Calu3 (cell line): ENCODE measurements at regions of chr2 and their contacts with region 1.

Region 1: DNA sequence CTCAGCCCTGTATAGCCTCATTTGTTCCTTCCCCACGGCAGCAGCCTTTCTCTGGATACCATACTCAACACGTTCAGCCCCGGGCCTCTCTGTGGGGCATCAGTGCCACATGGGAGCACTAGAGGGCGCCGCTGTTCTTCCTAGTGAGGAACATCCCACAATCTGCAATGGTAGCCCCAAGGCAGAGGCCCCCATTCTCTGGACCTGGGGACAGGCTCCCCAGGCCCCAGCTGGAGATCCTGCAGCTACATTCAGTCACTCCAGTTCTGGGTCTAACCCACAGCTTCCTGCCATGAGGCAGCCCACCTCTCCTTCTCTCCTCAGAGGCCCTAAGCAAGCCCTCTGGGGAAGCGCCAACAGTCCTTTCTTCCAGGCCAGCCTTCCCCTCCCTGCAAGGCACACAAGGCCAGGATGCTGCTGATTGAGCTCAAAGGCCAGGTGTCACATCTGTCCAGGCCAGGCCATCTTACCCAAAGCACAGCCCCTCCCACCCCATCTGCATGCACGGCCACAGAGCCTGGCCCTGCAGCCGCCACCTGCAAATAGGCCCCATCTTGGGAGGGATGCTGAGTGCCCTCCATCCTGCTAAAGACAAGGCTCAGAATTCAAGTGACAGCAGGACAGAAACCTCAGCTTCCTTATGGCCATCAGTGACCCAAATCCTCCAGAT is 14.3 kb upstream of the SFXN5 start:
- DNase-seq: peak; percentile 88
- H3K4me3 Mint-ChIP-seq: no peak overlapping the region
- H3K27ac Mint-ChIP-seq: no peak overlapping the region
- H3K4me1 Mint-ChIP-seq: peaks cover 35% of the 10 kb centered on the region
- H3K27me3 Mint-ChIP-seq: no peaks in the 10 kb centered on the region
- CTCF ChIP-seq: peak; percentile 75

Region 2: GRCh38 chr2:72980535-72981217 is 105.2 kb before region 1 on chr2:
- CTCF ChIA-PET with region 1: no interaction called
- intact Hi-C with region 1: no loop called
- DNase-seq: no peak
- H3K4me3 Mint-ChIP-seq: no peak overlapping the region
- H3K27ac Mint-ChIP-seq: no peak overlapping the region
- H3K4me1 Mint-ChIP-seq: no peaks in the 10 kb centered on the region
- H3K27me3 Mint-ChIP-seq: no peaks in the 10 kb centered on the region
- CTCF ChIP-seq: no peak

Region 3: DNA sequence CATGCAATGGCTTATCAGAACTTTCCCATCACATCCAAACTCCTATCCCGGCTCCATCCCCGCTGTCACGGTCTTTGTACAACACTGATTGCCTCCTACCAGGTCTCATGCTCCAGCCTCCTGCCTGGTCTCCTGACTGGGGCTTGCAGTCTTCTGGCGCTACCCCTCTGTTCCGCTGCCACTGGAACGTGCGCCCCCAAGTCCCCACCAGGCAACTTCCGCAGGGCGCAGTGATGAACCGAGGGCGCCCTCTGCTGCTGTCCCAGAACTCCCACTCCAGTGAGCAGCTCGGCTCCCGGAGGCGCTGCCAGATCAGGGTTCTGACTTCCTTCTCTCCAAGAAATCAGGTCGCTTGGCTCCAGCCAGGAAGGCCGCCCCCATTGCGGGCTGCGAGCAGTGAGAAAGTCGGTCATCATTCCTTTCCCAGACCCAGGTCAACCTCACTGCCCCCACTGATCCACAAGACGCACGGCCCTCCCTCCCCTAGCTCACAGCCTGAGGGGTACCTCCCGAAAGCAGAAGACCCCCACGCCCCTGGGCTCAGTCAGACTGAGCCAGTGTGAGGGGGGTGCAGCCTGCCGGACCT is 70.8 kb after region 1 on chr2:
- CTCF ChIA-PET with region 1: interaction called, 22 read pairs
- intact Hi-C with region 1: loop called (anchors 1 kb)
- DNase-seq: peak; percentile 71
- H3K4me3 Mint-ChIP-seq: peak overlapping the region; percentile 13
- H3K27ac Mint-ChIP-seq: no peak overlapping the region
- H3K4me1 Mint-ChIP-seq: peaks cover 8% of the 10 kb centered on the region
- H3K27me3 Mint-ChIP-seq: peaks cover 49% of the 10 kb centered on the region
- CTCF ChIP-seq: peak; percentile 68

Region 4: DNA sequence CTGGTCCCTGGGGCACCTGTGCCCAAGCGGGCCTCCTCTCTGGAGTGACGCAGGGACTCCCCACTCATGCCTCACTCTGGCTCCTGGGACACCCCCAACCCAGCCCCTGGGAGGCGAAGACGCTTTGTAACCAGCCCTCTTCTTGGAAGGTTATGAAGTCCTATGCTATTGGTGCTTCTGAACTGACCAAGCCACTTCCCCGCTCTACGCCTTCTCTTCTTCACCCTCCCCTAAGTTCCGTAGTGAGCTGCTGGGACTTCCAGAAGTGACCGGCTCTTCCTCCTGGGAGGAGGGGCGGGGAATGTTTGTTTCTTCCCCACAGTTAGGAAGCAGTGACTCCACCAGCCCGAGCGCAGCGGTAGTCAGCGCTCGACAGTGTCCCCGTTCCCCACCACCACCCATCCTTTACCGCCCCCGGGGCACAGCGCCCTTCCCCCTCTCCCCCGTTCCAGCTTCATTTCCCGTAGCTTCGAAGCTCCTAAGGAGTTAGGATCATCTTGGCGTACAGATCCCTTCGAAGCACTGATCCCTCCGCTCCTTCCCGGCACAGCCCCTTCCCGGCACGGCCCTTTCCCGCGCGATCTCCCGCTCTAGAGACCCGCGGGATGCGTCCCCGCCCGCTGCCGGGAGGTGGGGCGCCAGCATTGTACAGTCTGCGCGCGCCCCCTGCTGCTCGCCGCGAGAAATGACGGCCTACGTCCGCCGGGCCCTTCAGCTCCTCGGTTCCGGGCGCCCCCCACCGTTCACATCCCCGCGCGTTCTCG is 91.2 kb after region 1 on chr2:
- CTCF ChIA-PET with region 1: interaction called, 13 read pairs
- intact Hi-C with region 1: no loop called
- DNase-seq: peak; percentile 94
- H3K4me3 Mint-ChIP-seq: peak overlapping the region; percentile 86
- H3K27ac Mint-ChIP-seq: no peak overlapping the region
- H3K4me1 Mint-ChIP-seq: peaks cover 9% of the 10 kb centered on the region
- H3K27me3 Mint-ChIP-seq: peaks cover 86% of the 10 kb centered on the region
- CTCF ChIP-seq: peak; percentile 95